ENCODE measurements at regions of chr14 and their contacts with region 1.

Region 1: GRCh38 chr14:58637391-58638230 is at the start of gene DACT1:
- DNase-seq: peak; percentile 75
- H3K4me3 ChIP-seq: peak within 1 kb of the TSS; percentile 72
- H3K27ac ChIP-seq: peak within 1 kb of the TSS; percentile 90
- H3K27me3 ChIP-seq: no peaks in the 10 kb centered on the region
- CTCF ChIP-seq: no peak

Region 2: DNA sequence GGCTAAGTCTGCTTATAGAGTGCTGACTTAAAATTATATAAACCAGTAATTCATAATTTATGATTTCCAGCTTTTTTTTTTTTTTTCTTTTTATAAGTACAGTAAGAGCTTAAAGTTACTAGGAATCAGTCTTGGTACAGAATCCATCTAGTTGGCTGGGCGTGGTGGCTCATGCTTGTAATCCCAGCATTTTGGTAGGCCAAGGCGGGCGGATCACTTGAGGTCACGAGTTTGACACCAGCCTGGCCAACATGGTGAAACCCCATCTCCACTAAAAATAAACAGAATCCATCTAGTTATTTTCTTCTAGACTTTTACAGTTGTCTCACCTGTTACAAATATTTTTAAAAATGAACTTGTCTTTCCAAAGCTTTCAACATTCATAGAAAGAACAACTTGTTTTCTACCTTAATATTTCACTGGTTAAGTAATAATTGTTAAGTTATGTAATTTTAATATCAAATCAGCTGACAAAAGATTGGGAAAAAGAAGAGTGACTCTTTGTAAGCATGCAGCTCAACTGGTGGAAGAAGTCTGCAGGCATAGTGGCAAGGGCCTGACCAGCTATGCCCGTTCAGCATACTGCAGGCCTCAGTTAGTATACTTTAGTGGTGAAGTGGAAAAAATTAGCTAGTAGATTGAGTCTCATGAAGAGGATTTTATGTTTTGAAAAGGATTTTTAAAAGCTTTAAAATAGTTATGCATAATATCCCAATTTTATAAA is 410.4 kb before region 1 on chr14:
- in situ Hi-C with region 1: no loop called
- DNase-seq: no peak
- H3K4me3 ChIP-seq: no peak overlapping the region
- H3K27ac ChIP-seq: no peak overlapping the region
- H3K27me3 ChIP-seq: no peaks in the 10 kb centered on the region
- CTCF ChIP-seq: no peak

Region 3: GRCh38 chr14:59028476-59029202 is 391.0 kb after region 1 on chr14:
- in situ Hi-C with region 1: loop called (anchors 10 kb)
- DNase-seq: peak; percentile 93
- H3K4me3 ChIP-seq: no peak overlapping the region
- H3K27ac ChIP-seq: peak overlapping the region; percentile 35
- H3K27me3 ChIP-seq: no peaks in the 10 kb centered on the region
- CTCF ChIP-seq: peak; percentile 93

Region 4: GRCh38 chr14:59046746-59047145 is 409.1 kb after region 1 on chr14:
- in situ Hi-C with region 1: no loop called
- DNase-seq: no peak
- H3K4me3 ChIP-seq: no peak overlapping the region
- H3K27ac ChIP-seq: no peak overlapping the region
- H3K27me3 ChIP-seq: no peaks in the 10 kb centered on the region
- CTCF ChIP-seq: no peak